Activated CD8-positive, alpha-beta T cell treated with anti-CD3 and anti-CD28 coated beads, Interleukin-2, amount 10 ng/mL, durations not matched to agents 7 days and 5 days (primary cell): ENCODE measurements at regions of chr12 and their contacts with region 1.

Region 1: DNA sequence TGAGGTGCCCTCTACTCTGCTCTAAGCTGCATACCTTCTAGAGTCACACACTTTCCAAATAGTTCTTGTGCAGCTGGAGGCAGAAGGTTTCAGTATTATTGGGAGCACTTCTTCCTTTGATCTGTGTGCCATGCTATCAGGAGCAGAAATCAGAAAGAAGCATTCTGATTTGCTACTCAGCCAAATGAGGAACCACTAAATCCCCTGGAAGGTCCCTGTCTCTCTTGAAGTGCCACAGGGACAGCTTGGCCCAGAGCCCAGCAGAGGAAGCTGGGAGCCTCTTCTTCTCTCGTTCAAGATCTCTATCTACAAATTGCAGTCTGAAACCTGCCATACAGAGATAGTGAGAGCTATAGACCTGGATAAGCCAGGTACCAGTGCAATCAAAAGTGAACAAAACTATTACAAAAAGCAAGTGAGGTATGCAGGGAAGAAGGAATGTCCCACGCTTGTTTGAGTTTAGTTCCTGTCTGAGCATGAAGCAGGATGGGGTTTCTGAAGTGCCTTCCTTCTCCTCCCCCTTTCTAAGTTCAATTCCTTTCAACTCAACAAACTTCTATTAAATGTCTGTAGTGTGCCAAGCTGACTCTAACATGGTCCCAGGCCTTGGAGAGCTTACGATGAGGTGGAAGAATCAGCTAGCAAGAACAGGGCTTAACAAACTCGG is 100.9 kb upstream of the PARP11 start:
- DNase-seq: no peak
- ATAC-seq: peak; percentile 42
- H3K4me3 Mint-ChIP-seq: peak overlapping the region; percentile 20
- H3K27ac Mint-ChIP-seq: peak overlapping the region; percentile 81
- H3K4me1 Mint-ChIP-seq: peaks cover 60% of the 10 kb centered on the region
- H3K27me3 Mint-ChIP-seq: peaks cover under 1% of the 10 kb centered on the region

Region 2: GRCh38 chr12:3988519-3989448 is 14.7 kb after region 1 on chr12:
- CTCF ChIA-PET with region 1: interaction called, 36 read pairs
- POLR2A ChIA-PET with region 1: interaction called, 6 read pairs
- DNase-seq: peak; percentile 48
- ATAC-seq: peak; percentile 82
- H3K4me3 Mint-ChIP-seq: peak overlapping the region; percentile 29
- H3K27ac Mint-ChIP-seq: peak overlapping the region; percentile 86
- H3K4me1 Mint-ChIP-seq: peaks cover 25% of the 10 kb centered on the region
- H3K27me3 Mint-ChIP-seq: peaks cover 7% of the 10 kb centered on the region